Prostate gland (tissue), 2 donors: ENCODE measurements at regions of chr14 and their contacts with region 1.

Region 1: DNA sequence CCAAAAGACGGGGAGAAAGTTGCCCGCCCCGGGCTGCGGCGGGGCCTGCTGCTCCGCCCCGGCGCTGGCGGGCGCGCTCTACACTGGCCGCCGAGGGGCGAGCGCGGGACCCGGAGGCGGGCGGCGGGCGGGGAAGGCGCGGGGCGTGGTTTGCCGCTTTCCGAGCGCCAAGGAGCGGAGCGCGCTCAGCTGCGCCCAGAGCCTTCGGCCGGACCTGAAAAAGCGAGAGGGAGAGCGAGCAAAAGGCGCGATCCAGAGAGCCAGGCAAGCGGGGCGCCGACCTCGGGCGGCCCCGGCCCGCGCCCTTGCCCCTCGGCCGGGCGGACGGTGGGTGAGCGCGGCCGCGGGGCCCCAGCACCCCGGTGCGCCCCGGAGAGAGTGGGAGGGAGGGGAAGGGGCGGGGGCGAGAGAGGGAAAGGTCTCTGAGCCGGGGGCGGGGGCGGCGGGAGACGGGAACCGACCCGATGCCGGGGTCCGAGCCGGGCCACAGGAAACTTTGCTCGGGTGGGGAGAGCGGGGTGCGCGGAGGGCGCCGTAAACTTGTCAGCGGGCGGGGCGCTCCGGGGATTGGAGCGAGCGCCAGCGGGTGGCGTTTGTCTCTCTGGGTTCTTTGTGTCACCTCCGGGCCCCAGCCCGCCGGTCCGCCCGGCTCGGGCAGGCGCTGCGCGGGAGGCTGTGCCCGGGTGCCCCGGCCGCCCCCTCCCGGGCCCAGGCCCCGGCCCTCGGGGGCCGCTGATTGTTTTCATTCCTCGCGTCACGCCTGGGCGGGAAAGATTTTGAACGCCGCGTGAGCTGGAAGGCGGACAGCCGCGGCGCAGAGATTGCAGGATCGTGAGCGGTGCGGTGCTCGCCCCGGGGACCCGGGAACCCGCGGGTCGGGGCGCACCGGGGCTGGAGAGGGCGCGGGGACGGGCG is at the start of gene SYNE2:
- DNase-seq: peak; percentile 80
- H3K4me3 ChIP-seq: peak within 1 kb of the TSS; percentile 70 to 71
- H3K27ac ChIP-seq: peak within 1 kb of the TSS; percentile 89 to 90
- H3K4me1 ChIP-seq: no peaks in the 10 kb centered on the region
- H3K27me3 ChIP-seq: no peaks in the 10 kb centered on the region
- CTCF ChIP-seq: peak in 2 of 4 experiments; percentile 47 to 56
- POLR2A ChIP-seq: peak; percentile 62
- total RNA-seq, gene SYNE2: 104 to 390 TPM

Region 2: GRCh38 chr14:63893701-63894458 is 40.8 kb after region 1 on chr14:
- intact Hi-C with region 1: loop called (anchors 2 kb)
- DNase-seq: peak; percentile 23
- H3K4me3 ChIP-seq: no peak overlapping the region
- H3K27ac ChIP-seq: no peak overlapping the region
- H3K4me1 ChIP-seq: no peaks in the 10 kb centered on the region
- H3K27me3 ChIP-seq: no peaks in the 10 kb centered on the region
- CTCF ChIP-seq: no peak
- POLR2A ChIP-seq: no peak

Region 3: DNA sequence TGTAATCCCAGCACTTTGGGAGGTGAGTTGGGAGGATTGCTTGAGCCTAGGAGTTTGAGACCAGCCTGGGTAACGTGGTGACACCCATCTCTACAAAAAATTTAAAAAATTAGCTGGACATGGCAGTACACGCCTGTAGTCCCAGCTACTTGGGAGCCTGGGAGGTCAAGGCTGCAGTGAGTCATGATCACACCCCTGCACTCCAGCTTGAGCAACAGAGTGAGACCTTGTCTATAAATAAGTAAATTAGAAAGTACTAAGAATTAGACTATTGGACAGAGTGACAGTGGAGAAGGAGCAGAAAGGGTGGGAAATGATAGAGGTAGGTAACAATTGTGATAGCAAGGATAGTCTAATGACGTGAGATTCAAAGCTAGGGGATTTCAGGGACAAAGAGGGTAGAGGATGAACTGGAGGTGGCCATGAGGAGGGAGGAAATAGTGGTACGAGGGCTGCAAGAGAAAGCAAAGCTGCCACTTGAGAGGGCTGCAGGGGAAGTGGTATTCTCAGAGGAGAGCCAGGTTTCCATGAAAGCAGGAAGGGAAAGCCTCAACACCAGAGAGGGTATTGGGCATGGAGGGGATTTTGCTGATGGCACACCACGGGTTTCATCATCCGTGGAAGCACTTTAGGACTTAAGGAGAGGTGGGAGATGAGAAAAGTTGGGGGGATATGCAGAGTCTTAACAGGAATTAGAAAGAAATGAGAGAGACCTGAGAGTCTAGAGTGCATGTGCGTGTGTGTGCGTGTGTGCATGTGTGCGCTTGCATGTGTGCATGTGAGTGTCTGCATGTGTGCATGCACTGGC is 85.3 kb after region 1 on chr14:
- intact Hi-C with region 1: no loop called
- DNase-seq: no peak
- H3K4me3 ChIP-seq: no peak overlapping the region
- H3K27ac ChIP-seq: no peak overlapping the region
- H3K4me1 ChIP-seq: no peaks in the 10 kb centered on the region
- H3K27me3 ChIP-seq: no peaks in the 10 kb centered on the region
- CTCF ChIP-seq: no peak
- POLR2A ChIP-seq: no peak

Region 4: GRCh38 chr14:63993992-63994391 is 140.9 kb after region 1 on chr14:
- intact Hi-C with region 1: loop called (anchors 10 kb)
- DNase-seq: no peak
- H3K4me3 ChIP-seq: no peak overlapping the region
- H3K27ac ChIP-seq: no peak overlapping the region
- H3K4me1 ChIP-seq: no peaks in the 10 kb centered on the region
- H3K27me3 ChIP-seq: no peaks in the 10 kb centered on the region
- CTCF ChIP-seq: peak in 2 of 4 experiments; percentile 23 to 31
- POLR2A ChIP-seq: no peak